PC-9 (cell line): ENCODE measurements at regions of chr4 and their contacts with region 1.

Region 1: GRCh38 chr4:111854494-111855087 is 290.7 kb upstream of the FAM241A start:
- DNase-seq: peak; percentile 2 to 39
- H3K4me3 ChIP-seq: no peak overlapping the region
- H3K27ac ChIP-seq: no peak overlapping the region
- H3K4me1 ChIP-seq: no peaks in the 10 kb centered on the region
- H3K27me3 ChIP-seq: no peaks in the 10 kb centered on the region
- CTCF ChIP-seq: peak; percentile 87

Region 2: DNA sequence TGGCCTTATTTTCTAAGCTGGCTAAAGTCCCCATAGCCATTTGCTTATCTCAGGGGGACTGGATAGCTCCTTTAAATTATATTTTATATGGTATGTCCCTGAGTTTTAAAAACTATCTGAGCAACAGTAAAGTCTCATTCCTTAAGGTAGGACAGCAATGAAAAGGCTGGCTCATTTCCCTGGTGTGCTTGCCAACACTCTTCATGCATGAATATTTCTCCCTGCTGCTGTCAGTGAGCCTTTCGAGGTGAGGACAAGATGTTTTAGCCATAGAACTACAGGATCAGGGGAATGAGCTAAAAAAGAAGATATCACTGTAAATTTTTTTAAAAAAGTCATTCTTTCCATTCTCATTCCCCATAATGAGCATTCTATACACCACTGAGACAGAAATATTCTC is 136.7 kb before region 1 on chr4:
- CTCF ChIA-PET with region 1: no interaction called
- POLR2A ChIA-PET with region 1: no interaction called
- intact Hi-C with region 1: no loop called
- DNase-seq: no peak
- H3K4me3 ChIP-seq: no peak overlapping the region
- H3K27ac ChIP-seq: no peak overlapping the region
- H3K4me1 ChIP-seq: no peaks in the 10 kb centered on the region
- H3K27me3 ChIP-seq: no peaks in the 10 kb centered on the region
- CTCF ChIP-seq: no peak

Region 3: GRCh38 chr4:111778543-111778942 is 76.0 kb before region 1 on chr4:
- CTCF ChIA-PET with region 1: interaction called, 12 read pairs
- POLR2A ChIA-PET with region 1: interaction called, 3 read pairs
- intact Hi-C with region 1: no loop called
- DNase-seq: no peak
- H3K4me3 ChIP-seq: no peak overlapping the region
- H3K27ac ChIP-seq: no peak overlapping the region
- H3K4me1 ChIP-seq: peaks cover 18% of the 10 kb centered on the region
- H3K27me3 ChIP-seq: no peaks in the 10 kb centered on the region
- CTCF ChIP-seq: no peak; the same call in 1 of the 2 replicates